ENCODE measurements at regions of chr22 and their contacts with region 1.

Region 1: DNA sequence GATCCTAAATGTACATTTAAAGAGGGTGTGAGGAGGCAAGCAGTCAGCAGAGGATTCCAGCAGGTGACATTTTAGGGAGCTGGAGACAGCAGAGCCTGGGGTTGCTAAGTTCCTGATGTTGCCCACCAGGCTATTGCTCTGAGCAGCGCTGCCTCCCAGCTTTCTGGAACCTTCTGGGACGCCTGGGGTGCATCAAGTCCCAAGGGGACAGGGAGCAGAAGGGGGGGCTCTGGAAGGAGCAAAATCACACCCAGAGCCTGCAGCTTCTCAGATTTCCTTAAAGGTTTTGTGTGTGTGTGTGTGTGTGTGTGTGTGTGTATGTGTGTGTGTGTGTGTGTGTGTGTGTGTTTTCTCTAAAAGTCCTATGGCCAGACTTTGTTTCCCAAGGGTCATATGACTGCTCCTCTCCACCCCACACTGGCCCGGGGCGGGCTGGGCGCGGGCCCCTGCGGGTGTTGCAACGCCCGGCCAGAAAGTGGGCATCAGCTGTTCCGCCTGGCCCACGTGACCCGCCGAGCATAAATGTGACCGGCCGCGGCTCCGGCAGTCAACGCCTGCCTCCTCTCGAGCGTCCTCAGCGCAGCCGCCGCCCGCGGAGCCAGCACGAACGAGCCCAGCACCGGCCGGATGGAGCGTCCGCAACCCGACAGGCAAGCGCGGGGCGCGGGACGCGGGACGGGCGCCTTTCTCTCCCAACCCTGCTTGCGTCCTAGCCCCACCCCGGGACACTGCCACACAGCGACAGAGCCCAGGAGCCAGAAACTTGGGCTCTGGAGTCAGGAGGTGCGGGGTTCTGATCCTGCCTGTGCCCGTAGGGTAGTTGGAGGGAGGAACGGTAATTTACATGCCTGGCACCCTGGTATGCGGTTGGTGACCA is at the start of gene HMOX1:
- DNase-seq: peak; percentile 84 to 96
- H3K4me3 ChIP-seq: peak within 1 kb of the TSS; percentile 66 to 72
- H3K27ac ChIP-seq: peak within 1 kb of the TSS; percentile 77 to 87
- H3K4me1 ChIP-seq: peaks cover 5 to 29% of the 10 kb centered on the region in 2 donors
- H3K27me3 ChIP-seq: no peaks in the 10 kb centered on the region
- CTCF ChIP-seq: peak in 2 of 3 experiments; percentile 24 to 54
- total RNA-seq, gene HMOX1: 27.1 TPM

Region 2: DNA sequence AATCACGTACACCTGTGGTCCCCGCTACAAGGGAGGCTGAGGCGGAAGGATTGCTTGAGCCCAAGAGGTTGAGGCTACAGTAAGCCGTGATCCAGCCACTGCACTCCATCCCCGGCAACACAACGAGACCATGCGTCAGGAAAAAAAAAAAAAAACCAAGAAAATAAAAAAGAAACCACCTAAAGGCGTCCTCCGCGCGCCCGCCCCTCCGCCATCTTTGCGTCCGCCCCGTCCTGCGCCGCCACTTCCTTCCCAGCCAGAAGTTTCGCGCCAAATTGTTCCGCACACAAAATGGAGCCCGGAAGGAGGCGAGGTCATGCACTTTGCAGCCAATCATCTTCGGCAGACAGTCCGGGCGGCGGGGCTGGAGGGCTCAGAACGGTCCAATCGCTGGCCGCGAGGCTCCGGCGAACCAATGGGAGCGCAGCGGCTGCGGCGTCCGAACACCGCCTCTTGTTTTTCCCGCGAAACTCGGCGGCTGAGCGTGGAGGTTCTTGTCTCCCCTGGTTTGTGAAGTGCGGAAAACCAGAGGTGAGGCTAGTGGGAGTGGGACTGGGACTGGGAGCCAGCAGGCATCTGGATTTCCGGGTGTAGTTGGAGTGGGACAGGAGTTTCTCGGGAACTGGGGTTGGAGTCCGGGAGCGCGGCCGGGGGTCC is 19.0 kb after region 1 on chr22 and contains the start of gene MCM5:
- intact Hi-C with region 1: loop called (anchors 1 kb)
- DNase-seq: peak; percentile 89 to 98
- H3K4me3 ChIP-seq: peak within 1 kb of the TSS; percentile 63 to 91
- H3K27ac ChIP-seq: peak within 1 kb of the TSS; percentile 43 to 49
- H3K4me1 ChIP-seq: peaks cover 0 to 7% of the 10 kb centered on the region in 2 donors
- H3K27me3 ChIP-seq: no peaks in the 10 kb centered on the region
- CTCF ChIP-seq: no peak
- total RNA-seq, gene MCM5: 31.1 TPM

Measured in ascending aorta (tissue), 2 donors.